PC-9 (cell line): ENCODE measurements at regions of chr4 and their contacts with region 1.

Region 1: DNA sequence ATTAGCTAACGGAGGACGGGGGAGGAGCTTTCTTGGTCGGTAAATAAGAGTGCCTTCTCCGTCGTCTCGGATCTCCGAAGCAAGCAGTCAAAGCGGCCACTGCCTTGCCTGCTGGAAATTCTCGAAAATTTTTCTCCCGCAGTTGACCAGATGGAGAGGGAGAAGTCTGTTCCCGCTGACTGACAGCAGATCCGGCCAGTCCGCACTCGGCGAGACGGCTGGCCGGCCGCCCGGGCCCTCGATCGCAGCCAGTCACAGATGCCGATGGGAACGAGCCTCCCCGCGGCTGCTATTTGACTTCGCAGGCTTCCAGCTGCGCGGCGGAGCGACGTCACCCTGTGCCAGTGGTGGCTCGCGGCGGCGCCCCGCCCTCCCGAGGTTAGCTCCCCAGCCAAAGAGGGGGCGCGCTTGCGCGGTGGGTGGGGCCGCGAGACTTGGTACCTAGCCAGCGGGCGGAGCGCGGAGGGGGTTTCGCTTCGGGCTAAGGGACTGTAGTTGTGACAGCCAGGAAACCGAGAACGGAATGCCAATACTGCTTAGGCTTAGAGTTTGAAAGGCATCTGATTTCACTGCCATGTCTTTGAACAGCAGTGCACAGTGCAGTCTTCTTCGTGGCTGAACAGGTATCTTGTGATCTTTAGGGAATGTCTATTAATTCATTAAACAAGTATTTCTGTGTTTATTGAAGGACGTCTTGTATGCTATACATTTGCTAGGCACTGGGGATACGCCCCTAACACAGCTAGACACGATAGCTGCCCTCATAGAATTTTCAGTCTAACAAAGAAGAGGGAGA is at the start of gene PPM1K:
- DNase-seq: peak; percentile 91 to 97
- H3K4me3 ChIP-seq: peak within 1 kb of the TSS; percentile 79
- H3K27ac ChIP-seq: peak within 1 kb of the TSS; percentile 65
- H3K4me1 ChIP-seq: peaks cover 20% of the 10 kb centered on the region
- H3K27me3 ChIP-seq: no peaks in the 10 kb centered on the region
- CTCF ChIP-seq: no peak
- total RNA-seq, gene PPM1K: 5.4 and 5.7 TPM in 2 replicates

Region 2: DNA sequence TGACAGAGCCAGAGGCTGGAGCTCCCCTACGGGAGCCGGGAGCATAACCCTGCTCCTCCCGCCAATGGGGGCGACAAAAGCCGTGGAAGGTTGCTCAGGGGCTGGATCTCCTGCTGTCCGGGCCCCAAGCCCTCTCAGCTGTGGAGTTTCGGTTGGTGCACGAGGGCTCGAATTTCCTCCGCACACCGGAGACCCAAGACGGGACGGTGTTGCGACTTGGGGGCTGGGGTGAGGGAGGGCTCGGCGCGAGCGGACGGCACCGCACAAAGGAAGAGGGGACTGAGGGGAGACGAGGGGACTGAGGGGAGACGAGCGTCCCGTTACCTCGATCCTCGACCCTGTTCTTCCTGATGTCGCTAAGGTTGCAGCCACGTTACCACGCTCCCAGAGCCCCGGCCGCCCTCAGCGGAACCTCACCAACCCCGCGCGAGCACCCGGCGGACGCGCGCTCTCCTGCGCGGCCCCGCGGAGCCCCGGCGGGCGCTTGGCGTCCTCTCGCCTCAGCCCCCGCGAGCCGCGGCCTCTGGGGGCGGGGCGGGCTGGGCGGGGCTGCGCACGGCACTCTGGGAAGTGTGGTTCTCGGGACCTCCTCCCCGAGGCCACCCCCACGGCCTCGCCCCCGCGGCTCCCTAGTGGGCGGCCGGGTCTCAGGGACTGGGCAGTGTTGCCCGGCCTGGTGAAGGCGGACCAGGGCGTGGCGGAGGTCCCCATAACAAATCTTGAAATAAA is 1064.4 kb before region 1 on chr4 and contains the start of gene KLHL8:
- CTCF ChIA-PET with region 1: no interaction called
- POLR2A ChIA-PET with region 1: interaction called, 21 read pairs
- intact Hi-C with region 1: no loop called
- DNase-seq: peak; percentile 79 to 92
- H3K4me3 ChIP-seq: peak within 1 kb of the TSS; percentile 93
- H3K27ac ChIP-seq: peak within 1 kb of the TSS; percentile 78
- H3K4me1 ChIP-seq: peaks cover 7% of the 10 kb centered on the region
- H3K27me3 ChIP-seq: no peaks in the 10 kb centered on the region
- CTCF ChIP-seq: no peak
- total RNA-seq, gene KLHL8: 8.5 and 10.4 TPM in 2 replicates

Region 3: GRCh38 chr4:88230969-88231771 is 53.5 kb before region 1 on chr4:
- CTCF ChIA-PET with region 1: no interaction called
- POLR2A ChIA-PET with region 1: no interaction called
- intact Hi-C with region 1: no loop called
- DNase-seq: no peak
- H3K4me3 ChIP-seq: no peak overlapping the region
- H3K27ac ChIP-seq: no peak overlapping the region
- H3K4me1 ChIP-seq: no peaks in the 10 kb centered on the region
- H3K27me3 ChIP-seq: no peaks in the 10 kb centered on the region
- CTCF ChIP-seq: no peak

Region 4: DNA sequence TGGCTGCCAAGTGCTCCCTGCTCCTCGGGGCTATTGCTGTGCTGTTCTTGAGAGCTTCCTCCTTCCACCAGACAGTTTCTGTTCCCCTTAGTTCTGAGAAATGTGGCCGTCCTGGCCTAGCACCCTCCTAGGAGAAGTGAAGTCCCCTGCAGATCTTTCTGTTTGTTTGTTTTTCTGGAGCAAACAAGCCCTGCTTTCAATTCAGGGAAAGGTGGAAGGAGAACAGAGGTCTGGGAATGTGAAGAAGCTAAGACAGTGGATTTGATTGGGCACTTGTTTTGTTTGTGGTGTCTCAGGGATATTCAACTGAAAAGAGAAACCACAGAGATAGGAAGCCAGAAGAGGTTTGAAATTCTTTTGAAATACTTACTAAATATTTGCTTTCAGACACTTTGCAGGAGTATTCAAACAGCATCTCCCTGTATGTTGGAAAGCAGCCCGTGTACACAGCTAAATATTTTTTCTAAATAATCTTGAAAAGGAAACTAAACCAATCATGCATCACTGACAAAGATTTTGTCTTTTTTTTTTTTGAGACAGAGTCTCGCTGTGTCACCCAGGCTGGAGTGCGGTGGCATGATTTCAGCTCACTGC is 36.2 kb after region 1 on chr4:
- CTCF ChIA-PET with region 1: interaction called, 3 read pairs
- POLR2A ChIA-PET with region 1: no interaction called
- intact Hi-C with region 1: loop called (anchors 2 kb)
- DNase-seq: peak; percentile 10 to 85
- H3K4me3 ChIP-seq: peak overlapping the region; percentile 32; the same call in 1 of the 2 replicates
- H3K27ac ChIP-seq: peak overlapping the region; percentile 77
- H3K4me1 ChIP-seq: peaks cover 48% of the 10 kb centered on the region
- H3K27me3 ChIP-seq: no peaks in the 10 kb centered on the region
- CTCF ChIP-seq: no peak

Region 5: GRCh38 chr4:88366460-88366859 is 81.8 kb after region 1 on chr4:
- CTCF ChIA-PET with region 1: interaction called, 22 read pairs
- POLR2A ChIA-PET with region 1: no interaction called
- intact Hi-C with region 1: no loop called
- DNase-seq: no peak
- H3K4me3 ChIP-seq: no peak overlapping the region
- H3K27ac ChIP-seq: no peak overlapping the region
- H3K4me1 ChIP-seq: no peaks in the 10 kb centered on the region
- H3K27me3 ChIP-seq: no peaks in the 10 kb centered on the region
- CTCF ChIP-seq: no peak

Region 6: DNA sequence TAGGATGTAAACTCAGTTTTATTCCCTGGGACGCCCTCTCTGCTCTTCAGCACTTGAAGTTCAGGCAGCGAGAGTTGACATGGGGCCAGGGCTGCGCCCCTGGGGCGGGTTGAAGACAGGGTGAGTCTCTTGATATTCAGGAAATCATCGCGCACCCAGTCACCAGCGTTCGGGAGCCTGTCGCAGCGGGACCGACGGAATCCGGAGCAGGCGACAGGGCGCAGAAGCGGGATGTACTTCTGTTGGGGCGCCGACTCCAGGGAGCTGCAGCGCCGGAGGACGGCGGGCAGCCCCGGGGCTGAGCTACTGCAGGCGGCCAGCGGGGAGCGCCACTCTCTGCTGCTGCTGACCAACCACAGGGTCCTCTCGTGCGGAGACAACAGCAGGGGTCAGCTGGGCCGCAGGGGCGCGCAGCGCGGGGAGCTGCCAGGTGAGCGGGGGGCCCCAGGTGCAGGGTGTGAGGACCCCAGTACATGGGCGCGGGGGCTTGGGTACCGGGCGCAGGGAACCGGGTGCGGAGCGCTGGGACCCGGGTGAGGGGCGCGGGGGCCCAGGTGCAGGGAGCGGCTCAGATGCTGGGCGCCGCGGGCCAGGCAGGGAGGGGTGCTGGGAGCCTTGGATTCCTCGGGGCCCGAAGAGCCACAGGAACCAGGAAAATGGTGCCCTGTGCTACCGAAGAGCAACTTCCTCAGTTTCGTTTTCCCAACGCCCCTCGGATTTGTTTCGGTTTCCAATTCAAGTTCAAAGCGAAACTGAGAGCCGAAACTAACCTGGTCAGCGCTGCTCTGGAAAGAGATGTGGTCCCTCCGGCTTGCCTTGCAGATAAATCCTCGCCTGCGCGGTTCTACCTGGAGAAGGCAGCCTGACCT is 94.3 kb after region 1 on chr4 and contains the start of gene HERC6:
- CTCF ChIA-PET with region 1: no interaction called
- POLR2A ChIA-PET with region 1: no interaction called
- intact Hi-C with region 1: loop called (anchors 2 kb)
- DNase-seq: peak; percentile 64 to 80
- H3K4me3 ChIP-seq: peak within 1 kb of the TSS; percentile 74
- H3K27ac ChIP-seq: peak within 1 kb of the TSS; percentile 91
- H3K4me1 ChIP-seq: no peaks in the 10 kb centered on the region
- H3K27me3 ChIP-seq: no peaks in the 10 kb centered on the region
- CTCF ChIP-seq: peak; percentile 66; the same call in 1 of the 2 replicates
- total RNA-seq, gene HERC6: 4.9 and 5.6 TPM in 2 replicates

Region 7: DNA sequence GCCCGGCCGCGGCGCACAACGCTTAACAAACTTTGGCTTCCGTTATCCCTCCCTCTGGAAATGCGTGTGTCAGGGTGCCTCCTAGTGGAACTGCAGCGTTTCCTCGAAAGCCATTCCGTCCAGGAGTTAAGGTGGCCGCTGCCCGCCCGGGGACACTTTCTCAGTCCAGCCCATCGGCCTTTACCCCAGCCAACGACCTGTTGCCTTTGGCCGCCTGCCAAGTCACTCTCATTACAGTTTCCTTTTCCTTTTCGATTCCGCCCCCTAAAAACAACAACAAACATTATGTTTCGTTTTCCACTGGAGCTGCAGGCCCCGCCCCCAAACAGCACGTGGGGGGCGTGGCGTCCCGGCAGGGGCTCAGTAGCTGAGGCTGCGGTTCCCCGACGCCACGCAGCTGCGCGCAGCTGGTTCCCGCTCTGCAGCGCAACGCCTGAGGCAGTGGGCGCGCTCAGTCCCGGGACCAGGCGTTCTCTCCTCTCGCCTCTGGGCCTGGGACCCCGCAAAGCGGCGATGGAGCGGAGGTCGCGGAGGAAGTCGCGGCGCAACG is 172.2 kb after region 1 on chr4 and contains the start of gene HERC5:
- CTCF ChIA-PET with region 1: no interaction called
- POLR2A ChIA-PET with region 1: no interaction called
- intact Hi-C with region 1: loop called (anchors 2 kb)
- DNase-seq: peak; percentile 85 to 86
- H3K4me3 ChIP-seq: peak within 1 kb of the TSS; percentile 56; the same call in 1 of the 2 replicates
- H3K27ac ChIP-seq: no peak within 1 kb of the TSS
- H3K4me1 ChIP-seq: no peaks in the 10 kb centered on the region
- H3K27me3 ChIP-seq: no peaks in the 10 kb centered on the region
- CTCF ChIP-seq: peak; percentile 65
- total RNA-seq, gene HERC5: 3.6 and 4.6 TPM in 2 replicates